MCF 10A (cell line): ENCODE measurements at regions of chr4 and their contacts with region 1.

Region 1: DNA sequence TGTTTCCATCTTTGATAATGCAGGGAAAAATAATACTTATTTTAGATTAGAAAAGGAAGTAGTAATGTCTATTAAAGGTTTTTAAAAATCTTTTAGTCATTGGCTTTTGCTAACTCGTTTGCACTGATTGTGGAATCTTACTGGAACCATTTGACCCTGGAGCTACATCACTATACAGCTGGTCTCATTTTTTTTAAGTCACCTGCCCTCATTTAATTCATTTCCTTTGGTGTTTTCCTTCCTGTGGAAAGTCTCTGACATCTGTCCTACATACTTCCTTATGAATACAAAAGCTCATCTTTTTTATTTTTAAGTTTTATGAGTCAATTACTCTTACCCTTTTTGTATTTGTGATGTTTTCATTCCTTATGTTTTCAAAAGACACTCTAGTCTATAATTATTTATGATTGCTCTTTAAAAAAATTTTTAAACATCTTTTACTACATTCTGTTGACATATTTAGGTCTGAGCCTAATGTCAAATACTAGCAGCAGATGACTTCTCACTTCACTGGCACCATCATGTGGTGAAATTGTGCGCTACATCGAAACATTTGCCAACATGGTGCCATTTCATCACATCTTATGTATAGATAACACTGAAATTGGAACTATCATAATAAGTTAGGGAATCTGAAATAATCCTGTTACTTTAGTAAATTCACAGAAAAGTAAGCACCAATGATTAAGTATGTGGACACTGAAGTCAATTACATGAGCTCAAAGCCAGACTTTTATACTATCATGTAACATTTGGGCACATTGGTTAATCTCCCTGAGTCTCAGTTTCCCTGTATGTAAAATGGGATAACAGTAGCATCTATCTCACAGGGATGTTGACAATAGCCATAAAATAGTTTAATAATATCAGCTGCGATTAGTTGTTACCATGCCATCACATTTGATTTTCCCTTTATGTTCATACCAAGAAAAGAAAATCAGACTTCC is 9.4 kb upstream of the MMAA start:
- DNase-seq: peak; percentile 83
- H3K4me3 Mint-ChIP-seq: no peak overlapping the region
- H3K27ac Mint-ChIP-seq: no peak overlapping the region
- H3K4me1 Mint-ChIP-seq: no peaks in the 10 kb centered on the region
- H3K27me3 Mint-ChIP-seq: no peaks in the 10 kb centered on the region
- CTCF ChIP-seq: peak; percentile 77

Region 2: GRCh38 chr4:145340071-145340675 is 269.6 kb before region 1 on chr4:
- CTCF ChIA-PET with region 1: no interaction called
- POLR2A ChIA-PET with region 1: no interaction called
- intact Hi-C with region 1: no loop called
- DNase-seq: no peak
- H3K4me3 Mint-ChIP-seq: no peak overlapping the region
- H3K27ac Mint-ChIP-seq: no peak overlapping the region
- H3K4me1 Mint-ChIP-seq: peaks cover 5% of the 10 kb centered on the region
- H3K27me3 Mint-ChIP-seq: no peaks in the 10 kb centered on the region
- CTCF ChIP-seq: no peak

Region 3: DNA sequence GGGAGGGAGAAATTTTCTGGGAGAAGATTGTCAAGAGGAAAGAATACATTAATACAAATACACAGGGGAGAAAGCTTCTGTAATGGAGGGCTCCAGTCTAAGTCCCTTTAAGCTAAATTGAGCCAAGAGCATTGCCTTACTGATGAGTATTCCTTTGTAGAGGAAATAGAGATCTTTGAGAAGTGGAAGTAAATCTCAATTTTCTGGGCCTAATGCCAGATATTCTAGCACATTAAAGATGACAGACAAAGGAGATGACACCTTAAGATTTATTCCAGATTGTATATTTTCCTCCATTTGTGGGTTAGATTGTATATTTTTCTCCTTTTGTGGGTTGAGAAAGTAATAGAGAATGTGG is 156.6 kb before region 1 on chr4:
- CTCF ChIA-PET with region 1: no interaction called
- POLR2A ChIA-PET with region 1: no interaction called
- intact Hi-C with region 1: no loop called
- DNase-seq: no peak
- H3K4me3 Mint-ChIP-seq: no peak overlapping the region
- H3K27ac Mint-ChIP-seq: no peak overlapping the region
- H3K4me1 Mint-ChIP-seq: peaks cover 17% of the 10 kb centered on the region
- H3K27me3 Mint-ChIP-seq: no peaks in the 10 kb centered on the region
- CTCF ChIP-seq: no peak

Region 4: GRCh38 chr4:145557720-145558119 is 52.0 kb before region 1 on chr4:
- CTCF ChIA-PET with region 1: interaction called, 5 read pairs
- POLR2A ChIA-PET with region 1: no interaction called
- intact Hi-C with region 1: loop called (anchors 1 kb)
- DNase-seq: peak; percentile 72
- H3K4me3 Mint-ChIP-seq: no peak overlapping the region
- H3K27ac Mint-ChIP-seq: peak overlapping the region; percentile 37
- H3K4me1 Mint-ChIP-seq: no peaks in the 10 kb centered on the region
- H3K27me3 Mint-ChIP-seq: no peaks in the 10 kb centered on the region
- CTCF ChIP-seq: peak; percentile 90

Region 5: DNA sequence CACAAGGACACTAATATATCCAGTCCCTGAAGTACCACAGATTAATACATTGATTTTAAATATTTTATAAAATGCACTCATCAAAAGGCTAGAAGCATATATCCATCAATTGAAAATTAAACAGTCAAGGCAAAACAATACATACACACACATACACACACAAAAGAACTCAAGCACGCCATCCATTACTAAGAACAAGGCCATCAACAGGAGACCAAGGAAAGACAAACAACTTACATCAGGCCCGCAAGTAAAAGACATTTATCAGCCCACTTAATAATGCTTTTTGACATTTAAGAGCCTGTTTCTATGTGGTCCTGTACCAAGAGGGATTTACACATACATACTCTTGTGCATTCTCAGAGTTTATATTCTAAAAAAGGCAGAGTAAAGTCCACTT is 378.9 kb after region 1 on chr4:
- CTCF ChIA-PET with region 1: no interaction called
- POLR2A ChIA-PET with region 1: no interaction called
- intact Hi-C with region 1: no loop called
- DNase-seq: no peak
- H3K4me3 Mint-ChIP-seq: no peak overlapping the region
- H3K27ac Mint-ChIP-seq: no peak overlapping the region
- H3K4me1 Mint-ChIP-seq: no peaks in the 10 kb centered on the region
- H3K27me3 Mint-ChIP-seq: no peaks in the 10 kb centered on the region
- CTCF ChIP-seq: no peak